A673 (cell line): ENCODE measurements at regions of chr10 and their contacts with region 1.

Region 1: DNA sequence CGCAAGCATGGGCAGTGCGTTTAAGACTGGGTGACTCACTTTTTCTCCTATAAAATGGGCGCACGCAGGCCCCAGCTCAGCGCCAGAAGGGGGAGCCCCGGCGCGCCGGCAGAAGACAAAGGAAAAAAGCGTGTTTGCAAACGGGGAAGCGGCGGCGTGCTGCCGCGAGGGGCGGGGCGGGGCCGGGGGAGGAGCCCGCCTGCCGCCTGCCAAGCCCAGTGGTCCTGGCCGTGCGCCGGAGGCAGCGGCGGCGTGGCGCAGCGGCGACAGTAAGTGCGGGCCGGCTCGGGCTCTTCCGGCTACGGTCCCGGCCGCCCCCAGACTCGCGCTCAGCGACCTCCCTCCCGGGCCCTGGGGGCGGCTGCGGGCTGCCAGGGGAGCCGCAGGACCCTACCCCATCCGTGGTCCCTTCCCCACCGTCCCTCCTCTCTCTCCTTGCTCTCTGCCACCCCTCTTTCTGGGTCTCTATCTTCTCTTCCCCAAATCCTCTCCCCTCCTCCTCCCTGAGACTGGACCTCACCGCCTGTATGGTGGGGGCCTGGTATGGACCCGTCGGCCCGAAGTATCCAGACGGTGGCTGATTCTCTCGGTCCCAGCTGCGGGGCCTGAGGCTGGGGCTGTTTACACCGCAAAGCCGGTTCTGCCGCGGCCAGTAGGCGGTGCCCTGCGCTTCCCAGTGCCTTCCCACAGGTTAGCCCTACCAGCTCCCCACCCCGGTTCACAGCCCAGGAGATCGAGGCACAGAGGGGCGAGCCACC is at the start of gene SLC29A3:
- DNase-seq: peak; percentile 92
- H3K4me3 ChIP-seq: peak within 1 kb of the TSS; percentile 88
- H3K27ac ChIP-seq: peak within 1 kb of the TSS; percentile 78
- H3K4me1 ChIP-seq: peaks cover 5% of the 10 kb centered on the region
- H3K27me3 ChIP-seq: no peaks in the 10 kb centered on the region
- CTCF ChIP-seq: peak; percentile 79
- total RNA-seq, gene SLC29A3: 6.1 and 6.6 TPM in 2 replicates

Region 2: GRCh38 chr10:71475243-71475871 is 156.1 kb after region 1 on chr10:
- CTCF ChIA-PET with region 1: no interaction called
- POLR2A ChIA-PET with region 1: no interaction called
- intact Hi-C with region 1: no loop called
- DNase-seq: peak; percentile 60
- H3K4me3 ChIP-seq: no peak overlapping the region
- H3K27ac ChIP-seq: peak overlapping the region; percentile 2
- H3K4me1 ChIP-seq: peaks cover 9% of the 10 kb centered on the region
- H3K27me3 ChIP-seq: no peaks in the 10 kb centered on the region
- CTCF ChIP-seq: no peak

Region 3: DNA sequence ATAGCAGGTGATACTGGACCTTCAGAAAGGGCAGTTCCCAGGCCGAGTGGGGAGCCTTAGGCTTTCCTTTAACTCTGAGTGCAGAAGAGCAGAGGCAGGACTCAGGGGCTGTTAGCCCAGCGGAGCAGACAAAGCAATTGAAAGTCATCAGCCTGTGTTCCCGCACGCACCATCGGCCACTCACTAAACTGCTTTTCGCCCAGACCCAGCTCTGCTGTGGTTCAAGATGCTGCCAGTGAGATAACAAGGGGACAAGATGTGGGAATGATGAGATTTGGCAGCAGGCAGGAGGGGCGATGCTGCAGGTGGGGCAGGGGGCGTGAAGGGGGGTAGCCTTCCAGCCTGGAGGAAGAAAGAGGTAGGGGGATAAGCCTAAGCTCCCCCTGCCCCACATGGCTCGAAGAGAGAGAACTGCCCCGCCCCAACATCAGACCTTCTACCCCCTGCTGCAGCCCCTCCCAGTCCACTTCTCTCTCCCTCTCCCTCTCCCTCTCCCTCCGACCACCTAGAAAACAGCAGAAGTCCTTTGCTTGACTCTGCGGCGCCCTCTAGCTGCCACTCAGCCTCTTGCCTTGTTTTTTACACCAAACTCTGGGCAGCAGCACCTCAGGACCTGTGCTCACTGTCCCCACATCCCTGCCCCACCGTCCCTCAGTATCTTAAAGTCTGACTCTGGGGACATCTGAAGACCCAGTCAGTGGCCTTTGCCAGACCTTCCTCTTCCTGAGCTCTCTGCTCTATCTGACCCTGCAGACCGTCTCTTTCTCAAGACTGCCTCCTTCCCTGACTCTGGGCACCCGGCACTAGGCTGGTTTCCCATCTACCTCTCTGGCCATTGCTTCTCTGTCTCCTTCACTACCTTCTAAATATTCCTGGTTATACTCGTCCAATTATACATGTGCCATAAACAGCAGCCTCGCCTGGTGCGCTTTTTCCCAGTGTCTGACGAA is 289.9 kb after region 1 on chr10:
- CTCF ChIA-PET with region 1: interaction called, 3 read pairs
- POLR2A ChIA-PET with region 1: no interaction called
- intact Hi-C with region 1: loop called (anchors 10 kb)
- DNase-seq: peak; percentile 78
- H3K4me3 ChIP-seq: no peak overlapping the region
- H3K27ac ChIP-seq: no peak overlapping the region
- H3K4me1 ChIP-seq: peaks cover 9% of the 10 kb centered on the region
- H3K27me3 ChIP-seq: no peaks in the 10 kb centered on the region
- CTCF ChIP-seq: peak; percentile 91

Region 4: DNA sequence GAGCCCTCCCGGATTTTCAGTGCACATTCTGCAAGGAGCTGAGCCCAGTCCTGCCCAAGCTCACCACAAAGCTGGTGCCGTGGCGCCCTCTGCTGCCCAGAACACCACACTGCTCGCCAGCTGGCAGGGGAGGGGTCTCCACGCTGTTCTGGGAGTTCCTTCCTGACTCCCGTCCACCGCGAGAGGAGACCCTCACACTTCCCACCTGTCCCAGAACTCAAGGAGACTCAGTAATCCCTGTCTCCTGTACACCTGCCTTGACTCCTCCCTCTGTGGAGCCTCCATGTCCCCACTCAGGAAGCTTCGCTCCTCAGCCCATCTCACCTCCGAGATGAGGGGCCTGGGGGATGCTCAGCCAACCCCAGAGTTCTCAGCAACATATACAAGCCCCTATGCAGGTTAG is 389.1 kb after region 1 on chr10:
- CTCF ChIA-PET with region 1: interaction called, 7 read pairs
- POLR2A ChIA-PET with region 1: no interaction called
- intact Hi-C with region 1: loop called (anchors 2 kb)
- DNase-seq: peak; percentile 58
- H3K4me3 ChIP-seq: no peak overlapping the region
- H3K27ac ChIP-seq: no peak overlapping the region
- H3K4me1 ChIP-seq: peaks cover under 1% of the 10 kb centered on the region
- H3K27me3 ChIP-seq: no peaks in the 10 kb centered on the region
- CTCF ChIP-seq: peak; percentile 88

Region 5: GRCh38 chr10:71899665-71900412 is 580.6 kb after region 1 on chr10:
- CTCF ChIA-PET with region 1: interaction called, 4 read pairs
- POLR2A ChIA-PET with region 1: no interaction called
- intact Hi-C with region 1: loop called (anchors 5 kb)
- DNase-seq: no peak
- H3K4me3 ChIP-seq: no peak overlapping the region
- H3K27ac ChIP-seq: no peak overlapping the region
- H3K4me1 ChIP-seq: no peaks in the 10 kb centered on the region
- H3K27me3 ChIP-seq: no peaks in the 10 kb centered on the region
- CTCF ChIP-seq: no peak

Region 6: GRCh38 chr10:72331601-72332422 is 1012.6 kb after region 1 on chr10:
- CTCF ChIA-PET with region 1: no interaction called
- POLR2A ChIA-PET with region 1: no interaction called
- intact Hi-C with region 1: loop called (anchors 10 kb)
- DNase-seq: peak; percentile 91
- H3K4me3 ChIP-seq: no peak overlapping the region
- H3K27ac ChIP-seq: peak overlapping the region; percentile 80
- H3K4me1 ChIP-seq: peaks cover 38% of the 10 kb centered on the region
- H3K27me3 ChIP-seq: no peaks in the 10 kb centered on the region
- CTCF ChIP-seq: no peak